ENCODE measurements at regions of chr18 and their contacts with region 1.

Region 1: DNA sequence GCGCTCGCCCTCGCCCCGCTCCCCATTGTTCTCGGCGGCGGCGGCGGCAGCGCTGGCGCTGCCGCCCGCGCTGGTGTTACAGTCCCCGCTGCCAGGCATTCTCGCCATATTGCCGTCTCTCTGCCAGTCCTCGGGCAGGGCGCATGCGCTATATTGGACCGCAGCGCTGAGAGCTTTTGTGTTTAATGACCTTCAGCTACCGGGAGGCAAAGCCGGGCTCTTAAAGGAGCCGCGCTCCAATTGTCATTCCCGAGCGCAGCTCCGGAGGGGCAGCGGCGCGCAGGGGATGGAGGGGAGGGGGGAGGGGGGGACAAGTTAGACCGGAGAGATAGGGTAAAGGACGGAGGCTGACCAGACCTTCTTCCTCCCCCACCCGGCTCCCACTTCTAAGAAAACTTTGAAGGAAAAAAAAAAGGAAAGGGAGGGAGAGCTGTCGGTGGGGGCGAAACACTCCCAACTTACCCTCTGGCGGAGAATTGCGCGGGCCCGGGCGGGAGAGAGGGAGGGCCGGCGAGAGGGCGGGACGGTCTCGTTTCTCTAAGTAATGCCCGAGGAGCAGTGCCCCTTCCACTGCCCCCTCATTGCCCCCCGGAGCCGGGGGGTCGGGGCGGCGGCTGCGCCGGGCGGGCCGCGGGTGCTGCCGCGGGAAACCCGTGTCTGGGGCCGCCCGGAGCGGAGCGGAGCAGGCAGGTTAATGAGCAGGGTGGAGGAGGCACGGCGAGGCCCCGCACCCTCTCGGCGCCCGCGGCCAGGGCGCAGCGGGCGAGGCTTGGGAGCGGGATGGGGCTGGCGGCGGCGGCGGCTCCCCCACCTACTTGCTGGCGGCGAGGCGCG is at the start of gene KCTD1:
- DNase-seq: peak; percentile 56
- ATAC-seq: peak; percentile 62
- H3K4me3 ChIP-seq: peak within 1 kb of the TSS; percentile 68 to 73
- H3K27ac ChIP-seq: peak within 1 kb of the TSS; percentile 88
- H3K4me1 ChIP-seq: peaks cover 8 to 15% of the 10 kb centered on the region in 2 experiments; a peak in 3 of 4 replicates
- H3K27me3 ChIP-seq: no peaks in the 10 kb centered on the region
- CTCF ChIP-seq: no peak
- POLR2A ChIP-seq: no peak
- RAD21 ChIP-seq: no peak
- total RNA-seq, gene KCTD1: 16.8 TPM

Region 2: GRCh38 chr18:26429535-26430226 is 119.0 kb before region 1 on chr18:
- CTCF ChIA-PET with region 1: no interaction called
- POLR2A ChIA-PET with region 1: no interaction called
- RAD21 ChIA-PET with region 1: no interaction called
- intact Hi-C with region 1: loop called (anchors 5 kb)
- DNase-seq: peak; percentile 60
- ATAC-seq: peak; percentile 99
- H3K4me3 ChIP-seq: peak overlapping the region in 1 of 2 experiments; percentile 5; a peak in 1 of 4 replicates
- H3K27ac ChIP-seq: peak overlapping the region; percentile 5; the same call in 1 of the 2 replicates
- H3K4me1 ChIP-seq: peaks cover 7 to 18% of the 10 kb centered on the region in 2 experiments; a peak in 3 of 4 replicates
- H3K27me3 ChIP-seq: no peaks in the 10 kb centered on the region
- CTCF ChIP-seq: no peak
- POLR2A ChIP-seq: no peak
- RAD21 ChIP-seq: 0 out of 2 replicates have a peak, but pooled peaks have one; percentile 4

Region 3: DNA sequence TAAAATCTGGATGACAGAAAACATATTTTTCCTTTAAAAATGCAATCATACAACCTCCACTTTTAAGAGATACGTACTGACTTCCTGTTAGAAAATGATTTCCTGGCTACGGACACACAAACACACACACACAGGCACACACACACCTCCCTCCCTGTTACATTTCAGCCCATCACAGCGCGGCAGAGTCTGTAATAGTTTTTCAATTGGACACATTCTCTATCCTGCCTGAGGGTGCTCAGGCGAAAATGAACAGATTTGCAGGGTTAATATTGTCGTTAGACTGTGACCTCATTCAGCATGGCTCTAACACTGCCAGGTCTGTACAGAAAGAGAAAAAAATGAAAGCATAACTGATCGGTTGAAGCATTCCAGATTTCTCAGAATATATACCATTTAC is 45.3 kb before region 1 on chr18:
- CTCF ChIA-PET with region 1: no interaction called
- POLR2A ChIA-PET with region 1: no interaction called
- RAD21 ChIA-PET with region 1: interaction called in 1 of 2 experiments, 10 read pairs
- intact Hi-C with region 1: no loop called
- DNase-seq: no peak
- ATAC-seq: no peak
- H3K4me3 ChIP-seq: no peak overlapping the region
- H3K27ac ChIP-seq: no peak overlapping the region
- H3K4me1 ChIP-seq: no peaks in the 10 kb centered on the region
- H3K27me3 ChIP-seq: no peaks in the 10 kb centered on the region
- CTCF ChIP-seq: no peak
- POLR2A ChIP-seq: no peak
- RAD21 ChIP-seq: no peak

Region 4: DNA sequence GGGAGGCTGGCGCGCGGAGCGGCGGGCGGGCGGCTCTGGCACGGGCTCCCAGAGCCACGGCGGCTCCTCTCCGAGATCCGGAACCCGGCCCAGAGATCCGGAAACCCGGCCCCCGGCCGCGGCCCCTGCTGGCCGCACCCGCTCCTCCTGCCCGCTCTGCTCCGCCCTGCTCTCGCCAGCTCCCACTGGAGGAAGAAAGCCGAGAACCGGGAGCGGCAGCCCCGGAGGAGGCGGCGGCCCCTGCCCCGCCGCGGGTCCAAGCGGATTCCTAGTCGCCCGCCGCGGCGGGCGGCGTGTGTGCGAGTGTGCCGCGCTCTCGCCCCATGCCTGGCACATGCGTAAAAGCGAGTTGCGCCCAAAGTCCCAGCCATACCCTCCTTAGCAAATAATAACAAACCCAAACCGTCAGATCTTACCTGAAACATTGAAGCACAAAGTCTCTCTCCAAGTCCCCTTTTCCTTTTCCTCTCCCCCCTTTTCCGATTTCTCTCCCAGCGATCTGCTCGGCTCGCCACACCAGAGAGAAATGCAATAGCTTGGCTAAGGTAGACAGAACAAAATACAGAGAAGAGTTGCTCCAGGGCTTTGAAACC is 108.4 kb after region 1 on chr18:
- CTCF ChIA-PET with region 1: no interaction called
- POLR2A ChIA-PET with region 1: no interaction called
- RAD21 ChIA-PET with region 1: no interaction called
- intact Hi-C with region 1: no loop called
- DNase-seq: no peak
- ATAC-seq: peak; percentile 72
- H3K4me3 ChIP-seq: peak overlapping the region; percentile 58 to 65
- H3K27ac ChIP-seq: no peak overlapping the region; the same call in 1 of the 2 replicates
- H3K4me1 ChIP-seq: peaks cover 8 to 13% of the 10 kb centered on the region in 2 experiments
- H3K27me3 ChIP-seq: peaks cover 78% of the 10 kb centered on the region
- CTCF ChIP-seq: peak in 1 of 3 experiments; percentile 28; a peak in 1 of 6 replicates
- POLR2A ChIP-seq: no peak
- RAD21 ChIP-seq: no peak

Region 5: GRCh38 chr18:26745296-26746171 is 196.9 kb after region 1 on chr18:
- CTCF ChIA-PET with region 1: no interaction called
- POLR2A ChIA-PET with region 1: no interaction called
- RAD21 ChIA-PET with region 1: no interaction called
- intact Hi-C with region 1: no loop called
- DNase-seq: no peak
- ATAC-seq: no peak
- H3K4me3 ChIP-seq: no peak overlapping the region
- H3K27ac ChIP-seq: no peak overlapping the region
- H3K4me1 ChIP-seq: no peaks in the 10 kb centered on the region
- H3K27me3 ChIP-seq: peaks cover 11% of the 10 kb centered on the region; the same call in 1 of the 2 replicates
- CTCF ChIP-seq: no peak
- POLR2A ChIP-seq: no peak
- RAD21 ChIP-seq: no peak